Cardiac septum (tissue), 1 donor: ENCODE measurements at regions of chr6 and their contacts with region 1.

Region 1: GRCh38 chr6:134174672-134175198 is 122.3 kb upstream of the SLC2A12 start:
- DNase-seq: peak; percentile 97

Region 2: DNA sequence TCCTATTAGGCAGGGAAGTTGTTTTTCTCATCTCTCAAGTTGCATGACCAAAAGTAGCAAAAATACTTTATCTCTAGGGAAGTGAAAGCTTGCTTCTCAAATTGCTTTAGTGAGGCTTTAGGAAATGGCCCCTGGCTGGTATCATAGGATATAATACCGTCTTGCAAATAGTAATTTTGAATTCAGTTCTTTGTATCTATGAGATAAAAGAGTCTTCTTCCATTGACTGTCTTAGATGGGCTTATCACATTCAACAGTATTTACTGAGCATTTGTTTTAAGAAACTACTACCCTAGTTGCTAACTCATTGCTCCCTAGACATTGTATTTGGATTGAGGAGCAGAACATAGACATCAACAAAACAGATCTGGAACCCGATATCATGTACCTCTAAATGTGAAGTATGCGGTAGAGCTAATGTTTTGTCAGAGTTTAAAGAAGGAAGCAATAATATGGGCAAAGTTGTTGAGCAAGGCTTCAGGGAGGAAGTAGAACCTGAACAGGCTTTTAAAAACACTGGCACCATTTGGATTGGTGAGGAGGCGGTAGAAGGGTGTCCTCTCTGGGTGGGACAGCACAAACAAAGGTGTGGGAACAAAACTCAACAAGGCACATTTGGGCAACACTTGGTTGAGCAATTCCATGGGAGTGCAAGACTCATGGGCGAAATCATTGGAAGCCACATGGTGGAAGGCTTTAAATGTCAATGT is 41.7 kb after region 1 on chr6:
- intact Hi-C with region 1: no loop called
- DNase-seq: no peak

Region 3: DNA sequence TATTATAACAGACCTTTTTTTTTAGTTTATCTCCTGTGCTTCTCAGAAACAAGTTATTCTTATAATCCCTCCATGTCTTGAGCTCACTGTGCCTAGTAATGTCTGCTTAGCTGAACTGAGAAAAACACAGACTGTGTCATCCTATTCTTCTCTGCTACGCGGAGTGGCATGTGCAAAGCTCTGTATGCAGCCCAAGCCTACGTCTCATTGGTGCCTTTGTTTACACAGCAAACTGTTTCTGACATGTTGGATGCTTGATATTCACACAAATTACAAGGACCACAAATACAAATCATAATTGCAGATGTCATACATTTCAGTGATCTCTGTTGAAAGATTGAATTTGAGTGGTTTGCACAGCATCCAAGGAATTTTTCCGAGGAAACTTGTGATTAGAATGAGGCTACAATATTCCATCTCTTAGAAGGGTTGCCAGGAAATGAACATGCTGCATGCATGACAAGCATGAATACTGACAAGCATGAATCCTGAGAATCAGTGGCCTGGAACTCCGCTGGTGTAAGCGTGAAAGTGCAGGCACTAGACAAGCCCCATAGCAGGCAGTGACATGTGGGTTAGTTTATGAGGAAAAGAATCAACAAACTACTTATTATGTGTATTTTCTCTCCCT is 271.6 kb after region 1 on chr6:
- intact Hi-C with region 1: loop called (anchors 10 kb)
- DNase-seq: no peak

Region 4: GRCh38 chr6:134529921-134530320 is 355.2 kb after region 1 on chr6:
- intact Hi-C with region 1: loop called (anchors 5 kb)
- DNase-seq: no peak

Region 5: DNA sequence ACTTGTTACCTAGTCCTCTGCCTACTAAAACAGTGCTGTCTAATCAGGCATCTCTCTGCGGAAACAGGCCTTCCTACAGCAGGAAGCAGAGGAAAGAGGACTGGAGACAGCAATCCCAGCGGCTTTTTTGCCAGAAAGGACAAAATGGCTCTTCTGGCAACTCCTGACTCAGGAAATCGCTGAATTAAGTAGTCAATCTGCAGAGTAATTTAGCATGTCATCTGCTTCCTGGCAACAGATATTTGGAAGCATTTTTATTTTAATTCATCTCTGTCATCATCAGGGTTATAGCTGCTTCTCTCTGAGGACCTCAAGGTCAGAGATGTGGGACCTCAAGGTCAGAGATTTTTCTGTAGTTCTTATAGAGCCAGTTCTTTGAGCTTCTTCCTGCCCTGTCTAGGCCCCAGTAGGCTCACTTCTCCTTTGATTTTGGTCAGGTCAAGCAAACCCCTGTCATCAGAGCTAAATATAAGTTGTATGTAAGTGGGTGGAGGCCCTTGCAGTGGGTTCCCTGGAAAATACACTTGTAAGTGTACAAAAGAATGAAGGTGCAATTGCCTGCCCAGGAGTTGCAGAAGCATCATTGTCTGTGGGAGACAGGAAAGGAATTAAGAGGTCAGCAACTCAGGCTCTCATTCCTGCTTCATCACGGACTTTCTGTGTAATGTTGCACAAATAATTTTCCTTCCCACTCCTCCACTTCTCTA is 545.8 kb after region 1 on chr6:
- intact Hi-C with region 1: loop called (anchors 2 kb)
- DNase-seq: no peak

Region 6: GRCh38 chr6:134882426-134883038 is 707.8 kb after region 1 on chr6:
- intact Hi-C with region 1: loop called (anchors 5 kb)
- DNase-seq: no peak